IMR-90 (cell line): ENCODE measurements at regions of chr4 and their contacts with region 1.

Region 1: GRCh38 chr4:147866532-147867271 is 134.8 kb downstream of the ARHGAP10 start:
- DNase-seq: peak; percentile 91
- ATAC-seq: peak; percentile 85
- H3K4me3 ChIP-seq: no peak overlapping the region
- H3K27ac ChIP-seq: no peak overlapping the region
- H3K4me1 ChIP-seq: peaks cover 14% of the 10 kb centered on the region
- H3K27me3 ChIP-seq: no peaks in the 10 kb centered on the region
- CTCF ChIP-seq: peak; percentile 100; the same call in 1 of the 2 replicates
- POLR2A ChIP-seq: peak; percentile 61; the same call in 1 of the 2 replicates
- RAD21 ChIP-seq: peak; percentile 99

Region 2: GRCh38 chr4:147136310-147136709 is 730.4 kb before region 1 on chr4:
- CTCF ChIA-PET with region 1: no interaction called
- POLR2A ChIA-PET with region 1: no interaction called
- dilution Hi-C with region 1: no loop called
- in situ Hi-C with region 1: no loop called
- intact Hi-C with region 1: loop called (anchors 10 kb)
- DNase-seq: peak; percentile 84
- ATAC-seq: peak; percentile 71
- H3K4me3 ChIP-seq: no peak overlapping the region
- H3K27ac ChIP-seq: 0 out of 2 replicates have a peak overlapping the region, but pooled peaks have one; percentile 1
- H3K4me1 ChIP-seq: peaks cover 12% of the 10 kb centered on the region
- H3K27me3 ChIP-seq: no peaks in the 10 kb centered on the region
- CTCF ChIP-seq: no peak
- POLR2A ChIP-seq: no peak
- RAD21 ChIP-seq: no peak

Region 3: DNA sequence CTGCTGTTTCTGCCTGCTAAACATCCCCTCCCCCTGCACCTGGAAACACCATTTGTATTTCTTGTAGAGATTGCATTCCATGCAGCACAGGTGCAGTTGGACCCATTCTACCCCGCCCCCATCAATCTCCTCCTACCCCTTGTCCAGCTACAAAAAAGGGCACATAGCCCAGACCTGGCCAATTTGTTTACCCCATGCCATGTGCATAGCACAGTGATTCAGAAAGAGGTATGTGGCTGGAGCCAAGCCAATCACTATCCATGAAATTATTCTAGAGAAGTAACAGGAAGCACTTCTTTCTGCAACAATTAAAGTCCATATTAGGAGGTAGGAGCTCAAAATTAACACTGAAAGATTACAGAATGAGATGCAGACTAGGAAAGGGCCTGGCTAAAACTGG is 269.7 kb before region 1 on chr4:
- CTCF ChIA-PET with region 1: interaction called, 9 read pairs
- POLR2A ChIA-PET with region 1: interaction called, 5 read pairs
- dilution Hi-C with region 1: no loop called
- in situ Hi-C with region 1: loop called (anchors 5 kb)
- intact Hi-C with region 1: loop called (anchors 2 kb)
- DNase-seq: peak; percentile 93
- ATAC-seq: peak; percentile 70
- H3K4me3 ChIP-seq: no peak overlapping the region
- H3K27ac ChIP-seq: peak overlapping the region; percentile 76
- H3K4me1 ChIP-seq: peaks cover 16% of the 10 kb centered on the region
- H3K27me3 ChIP-seq: no peaks in the 10 kb centered on the region
- CTCF ChIP-seq: no peak
- POLR2A ChIP-seq: no peak
- RAD21 ChIP-seq: no peak

Region 4: GRCh38 chr4:147683717-147684700 is 182.7 kb before region 1 on chr4 and contains the start of gene PRMT9:
- CTCF ChIA-PET with region 1: interaction called, 6 read pairs
- POLR2A ChIA-PET with region 1: no interaction called
- dilution Hi-C with region 1: no loop called
- in situ Hi-C with region 1: no loop called
- intact Hi-C with region 1: loop called (anchors 1 kb)
- DNase-seq: peak; percentile 97
- ATAC-seq: peak; percentile 99
- H3K4me3 ChIP-seq: peak within 1 kb of the TSS; percentile 82
- H3K27ac ChIP-seq: peak within 1 kb of the TSS; percentile 87
- H3K4me1 ChIP-seq: no peaks in the 10 kb centered on the region
- H3K27me3 ChIP-seq: no peaks in the 10 kb centered on the region
- CTCF ChIP-seq: no peak
- POLR2A ChIP-seq: peak; percentile 94
- RAD21 ChIP-seq: no peak; the same call in 1 of the 2 replicates
- total RNA-seq, gene PRMT9: 14.2 and 15.6 TPM in 2 replicates

Region 5: GRCh38 chr4:147731580-147732517 is 134.9 kb before region 1 on chr4 and contains the start of gene ARHGAP10:
- CTCF ChIA-PET with region 1: interaction called, 13 read pairs
- POLR2A ChIA-PET with region 1: no interaction called
- dilution Hi-C with region 1: no loop called
- in situ Hi-C with region 1: loop called (anchors 5 kb)
- intact Hi-C with region 1: loop called (anchors 1 kb)
- DNase-seq: peak; percentile 82
- ATAC-seq: peak; percentile 83
- H3K4me3 ChIP-seq: peak within 1 kb of the TSS; percentile 97
- H3K27ac ChIP-seq: peak within 1 kb of the TSS; percentile 97
- H3K4me1 ChIP-seq: peaks cover 16% of the 10 kb centered on the region
- H3K27me3 ChIP-seq: no peaks in the 10 kb centered on the region
- CTCF ChIP-seq: no peak
- POLR2A ChIP-seq: peak; percentile 73
- RAD21 ChIP-seq: no peak; the same call in 1 of the 2 replicates
- total RNA-seq, gene ARHGAP10: 29.4 and 42.8 TPM in 2 replicates

Region 6: GRCh38 chr4:148542922-148543623 is 676.4 kb after region 1 on chr4:
- CTCF ChIA-PET with region 1: no interaction called
- POLR2A ChIA-PET with region 1: no interaction called
- dilution Hi-C with region 1: no loop called
- in situ Hi-C with region 1: no loop called
- intact Hi-C with region 1: no loop called
- DNase-seq: peak; percentile 23
- ATAC-seq: no peak
- H3K4me3 ChIP-seq: no peak overlapping the region
- H3K27ac ChIP-seq: no peak overlapping the region
- H3K4me1 ChIP-seq: no peaks in the 10 kb centered on the region
- H3K27me3 ChIP-seq: no peaks in the 10 kb centered on the region
- CTCF ChIP-seq: no peak
- POLR2A ChIP-seq: no peak
- RAD21 ChIP-seq: no peak